ENCODE measurements at regions of chr4 and their contacts with region 1.

Region 1: GRCh38 chr4:63764400-63764799 is 644.9 kb downstream of the TECRL start:
- DNase-seq: no peak
- H3K4me3 ChIP-seq: no peak overlapping the region
- H3K27ac ChIP-seq: no peak overlapping the region
- H3K4me1 ChIP-seq: no peaks in the 10 kb centered on the region
- H3K27me3 ChIP-seq: no peaks in the 10 kb centered on the region
- CTCF ChIP-seq: no peak
- EP300 ChIP-seq: no peak
- POLR2A ChIP-seq: no peak

Region 2: DNA sequence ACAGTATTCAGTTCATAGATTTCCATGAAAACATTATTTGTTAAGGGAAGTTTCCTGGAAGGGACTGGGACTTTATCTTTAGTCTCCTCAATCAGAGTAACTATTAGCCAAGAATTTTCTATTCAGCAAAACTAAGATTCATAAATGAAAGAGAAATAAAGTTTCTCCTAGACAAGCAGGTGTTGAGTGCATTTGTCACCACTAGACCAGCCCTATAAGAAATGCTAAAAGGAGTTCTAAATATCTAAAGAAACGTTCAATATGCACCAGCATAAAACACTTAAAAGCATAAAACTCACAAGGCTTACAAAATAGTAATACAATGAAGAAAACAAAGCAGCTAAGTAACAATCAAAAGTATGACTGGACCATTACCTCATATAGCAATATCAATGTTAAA is 221.9 kb after region 1 on chr4:
- in situ Hi-C with region 1: no loop called
- intact Hi-C with region 1: no loop called
- DNase-seq: no peak
- H3K4me3 ChIP-seq: no peak overlapping the region
- H3K27ac ChIP-seq: no peak overlapping the region
- H3K4me1 ChIP-seq: no peaks in the 10 kb centered on the region
- H3K27me3 ChIP-seq: no peaks in the 10 kb centered on the region
- CTCF ChIP-seq: no peak
- EP300 ChIP-seq: no peak
- POLR2A ChIP-seq: no peak

Region 3: DNA sequence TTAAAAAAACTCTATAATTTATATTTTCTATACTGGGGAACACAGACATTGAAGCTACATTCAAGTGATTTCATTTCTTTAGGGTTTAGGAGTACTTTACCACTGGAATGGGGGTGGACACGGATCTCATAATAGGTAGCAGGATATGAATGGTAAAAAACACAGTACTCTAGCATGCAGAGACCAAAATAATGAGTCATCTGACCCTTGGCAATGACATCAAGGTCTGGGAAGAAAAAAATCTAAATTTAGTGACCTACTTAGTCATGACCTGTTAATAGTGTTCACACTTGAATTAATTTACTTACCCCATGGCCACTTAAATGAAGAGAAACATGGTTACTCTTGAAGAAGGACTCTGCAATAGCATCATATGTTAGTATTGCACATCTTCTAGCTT is 1718.0 kb after region 1 on chr4:
- in situ Hi-C with region 1: no loop called
- intact Hi-C with region 1: loop called (anchors 5 kb)
- DNase-seq: no peak
- H3K4me3 ChIP-seq: no peak overlapping the region
- H3K27ac ChIP-seq: no peak overlapping the region
- H3K4me1 ChIP-seq: no peaks in the 10 kb centered on the region
- H3K27me3 ChIP-seq: no peaks in the 10 kb centered on the region
- CTCF ChIP-seq: no peak
- EP300 ChIP-seq: no peak
- POLR2A ChIP-seq: no peak

Measured in transverse colon (tissue), 4 donors.